ENCODE measurements at regions of chr11 and their contacts with region 1.

Region 1: DNA sequence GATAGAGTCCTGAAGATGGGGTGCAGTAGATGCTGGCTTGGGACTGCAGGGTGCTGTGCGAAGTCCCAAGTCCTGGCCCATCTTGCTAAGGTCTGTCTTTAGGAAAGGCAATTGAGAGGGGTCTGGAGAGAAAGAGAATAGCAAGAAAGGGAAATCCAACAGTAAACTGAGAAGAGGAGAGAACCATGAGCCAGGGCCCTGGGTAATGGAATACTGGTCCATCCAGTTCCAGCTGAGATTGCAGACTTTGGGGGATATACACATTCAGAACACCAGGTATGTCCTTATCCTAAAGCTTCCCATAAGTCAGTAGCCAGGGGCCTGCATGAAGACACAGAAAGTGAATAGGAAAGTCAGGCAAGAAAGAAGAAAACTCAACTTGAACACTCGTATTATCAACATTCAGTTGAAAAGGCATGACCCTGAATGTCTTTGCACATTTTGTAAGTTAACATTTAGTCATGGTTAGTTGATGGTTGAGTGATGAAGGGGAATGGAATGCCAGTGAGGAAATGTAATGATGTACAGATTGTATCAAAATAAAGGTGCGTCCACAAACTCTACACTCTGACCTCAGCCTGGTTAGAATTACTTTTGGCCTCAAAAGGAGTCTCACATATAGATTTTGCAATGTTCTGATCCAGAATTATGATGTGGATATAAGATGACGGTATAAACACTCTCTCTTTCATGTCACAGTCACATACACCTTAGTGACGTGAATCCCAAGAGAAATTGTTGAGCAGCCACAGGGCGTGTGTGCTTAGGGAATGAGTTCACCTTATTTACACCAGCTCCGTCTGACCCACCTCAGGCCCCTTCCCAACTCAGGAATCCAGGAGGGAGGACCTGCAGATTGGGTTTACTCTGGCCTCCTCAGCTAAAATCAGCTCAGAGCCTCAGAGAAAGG is 100.3 kb downstream of the RDX start:
- DNase-seq: peak; percentile 87
- ATAC-seq: peak; percentile 55
- H3K4me3 ChIP-seq: no peak overlapping the region
- H3K27ac ChIP-seq: peak overlapping the region; percentile 59
- H3K4me1 ChIP-seq: peaks cover 26% of the 10 kb centered on the region
- H3K27me3 ChIP-seq: no peaks in the 10 kb centered on the region
- CTCF ChIP-seq: no peak
- POLR2A ChIP-seq: no peak
- RAD21 ChIP-seq: no peak

Region 2: DNA sequence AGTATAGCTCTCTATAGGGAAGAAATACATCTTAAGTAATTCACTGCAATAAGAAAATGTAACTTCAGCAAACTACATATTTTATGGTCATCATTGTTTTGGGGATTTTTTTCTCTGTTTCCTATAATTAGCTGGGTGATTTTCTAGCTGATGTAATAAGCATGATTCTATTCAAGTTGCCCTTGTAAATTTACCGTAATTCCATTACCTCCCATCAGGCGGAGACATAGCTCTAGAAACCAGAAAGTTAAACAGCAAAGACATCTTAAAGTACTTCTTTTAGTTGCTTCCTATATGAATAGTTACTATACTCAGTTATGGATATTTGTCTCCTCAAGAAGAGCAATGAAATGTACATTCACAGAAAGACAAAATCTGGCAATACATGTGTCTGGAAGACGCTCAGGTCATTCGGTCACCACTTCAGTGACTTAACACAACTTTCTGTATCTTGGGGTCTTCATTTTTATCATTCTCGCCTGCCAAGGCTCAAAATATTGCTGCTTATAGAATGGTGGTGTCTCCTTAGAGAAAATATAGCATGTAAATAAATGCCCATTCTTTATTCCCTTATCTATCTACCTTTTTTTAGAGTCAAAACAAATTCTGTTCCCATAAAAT is 342.8 kb before region 1 on chr11:
- CTCF ChIA-PET with region 1: no interaction called
- POLR2A ChIA-PET with region 1: no interaction called
- dilution Hi-C with region 1: no loop called
- in situ Hi-C with region 1: no loop called
- intact Hi-C with region 1: loop called (anchors 10 kb)
- DNase-seq: peak; percentile 87
- ATAC-seq: peak; percentile 87
- H3K4me3 ChIP-seq: no peak overlapping the region
- H3K27ac ChIP-seq: no peak overlapping the region
- H3K4me1 ChIP-seq: no peaks in the 10 kb centered on the region; the same call in 1 of the 2 replicates
- H3K27me3 ChIP-seq: no peaks in the 10 kb centered on the region
- CTCF ChIP-seq: peak; percentile 91
- POLR2A ChIP-seq: no peak
- RAD21 ChIP-seq: peak; percentile 87

Region 3: GRCh38 chr11:109971184-109971523 is 224.9 kb before region 1 on chr11:
- CTCF ChIA-PET with region 1: no interaction called
- POLR2A ChIA-PET with region 1: no interaction called
- dilution Hi-C with region 1: no loop called
- in situ Hi-C with region 1: loop called (anchors 25 kb)
- intact Hi-C with region 1: no loop called
- DNase-seq: peak; percentile 84
- ATAC-seq: peak; percentile 72
- H3K4me3 ChIP-seq: no peak overlapping the region
- H3K27ac ChIP-seq: no peak overlapping the region
- H3K4me1 ChIP-seq: peaks cover 3% of the 10 kb centered on the region; the same call in 1 of the 2 replicates
- H3K27me3 ChIP-seq: no peaks in the 10 kb centered on the region
- CTCF ChIP-seq: no peak
- POLR2A ChIP-seq: no peak
- RAD21 ChIP-seq: no peak

Region 4: GRCh38 chr11:110069158-110069737 is 126.9 kb before region 1 on chr11:
- CTCF ChIA-PET with region 1: no interaction called
- POLR2A ChIA-PET with region 1: no interaction called
- dilution Hi-C with region 1: no loop called
- in situ Hi-C with region 1: no loop called
- intact Hi-C with region 1: no loop called
- DNase-seq: peak; percentile 88
- ATAC-seq: peak; percentile 73
- H3K4me3 ChIP-seq: no peak overlapping the region
- H3K27ac ChIP-seq: no peak overlapping the region
- H3K4me1 ChIP-seq: peaks cover 10% of the 10 kb centered on the region
- H3K27me3 ChIP-seq: no peaks in the 10 kb centered on the region
- CTCF ChIP-seq: no peak
- POLR2A ChIP-seq: no peak
- RAD21 ChIP-seq: no peak

Region 5: GRCh38 chr11:110366291-110366690 is 170.2 kb after region 1 on chr11:
- CTCF ChIA-PET with region 1: interaction called, 8 read pairs
- POLR2A ChIA-PET with region 1: no interaction called
- dilution Hi-C with region 1: no loop called
- in situ Hi-C with region 1: loop called (anchors 5 kb)
- intact Hi-C with region 1: loop called (anchors 2 kb)
- DNase-seq: peak; percentile 28
- ATAC-seq: peak; percentile 78
- H3K4me3 ChIP-seq: no peak overlapping the region
- H3K27ac ChIP-seq: no peak overlapping the region
- H3K4me1 ChIP-seq: peaks cover 4% of the 10 kb centered on the region
- H3K27me3 ChIP-seq: no peaks in the 10 kb centered on the region
- CTCF ChIP-seq: no peak
- POLR2A ChIP-seq: no peak
- RAD21 ChIP-seq: no peak

Region 6: DNA sequence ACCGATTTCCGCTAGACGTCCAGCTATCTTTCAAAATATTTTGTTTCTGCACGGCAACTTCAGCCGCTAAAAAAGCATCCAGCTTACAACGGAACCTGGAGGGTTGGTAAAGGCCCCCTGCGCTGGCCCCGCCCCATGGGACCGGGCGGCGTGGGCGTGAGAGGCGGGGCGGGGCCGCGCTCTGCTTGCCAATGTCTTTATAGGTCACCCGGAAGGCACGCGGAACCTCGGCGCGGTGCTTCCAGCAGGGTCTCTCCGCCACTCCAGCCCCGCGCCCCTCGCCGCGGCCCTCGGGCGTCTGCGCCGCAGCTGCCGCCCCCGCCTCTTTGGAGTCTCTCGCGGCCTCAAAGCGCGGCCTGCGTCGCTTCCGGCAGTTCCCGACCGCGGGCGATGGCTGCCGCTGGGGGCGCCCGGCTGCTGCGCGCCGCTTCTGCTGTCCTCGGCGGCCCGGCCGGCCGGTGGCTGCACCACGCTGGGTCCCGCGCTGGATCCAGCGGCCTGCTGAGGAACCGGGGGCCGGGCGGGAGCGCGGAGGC is 233.7 kb after region 1 on chr11 and contains the start of gene FDX1:
- CTCF ChIA-PET with region 1: interaction called, 18 read pairs
- POLR2A ChIA-PET with region 1: interaction called, 3 read pairs
- dilution Hi-C with region 1: no loop called
- in situ Hi-C with region 1: loop called (anchors 5 kb)
- intact Hi-C with region 1: loop called (anchors 1 kb)
- DNase-seq: peak; percentile 74
- ATAC-seq: peak; percentile 86
- H3K4me3 ChIP-seq: peak within 1 kb of the TSS; percentile 86
- H3K27ac ChIP-seq: peak within 1 kb of the TSS; percentile 92
- H3K4me1 ChIP-seq: peaks cover 9% of the 10 kb centered on the region
- H3K27me3 ChIP-seq: no peaks in the 10 kb centered on the region
- CTCF ChIP-seq: peak; percentile 65
- POLR2A ChIP-seq: peak; percentile 82
- RAD21 ChIP-seq: peak; percentile 38
- total RNA-seq, gene FDX1: 4.3 and 10.6 TPM in 2 replicates

Region 7: DNA sequence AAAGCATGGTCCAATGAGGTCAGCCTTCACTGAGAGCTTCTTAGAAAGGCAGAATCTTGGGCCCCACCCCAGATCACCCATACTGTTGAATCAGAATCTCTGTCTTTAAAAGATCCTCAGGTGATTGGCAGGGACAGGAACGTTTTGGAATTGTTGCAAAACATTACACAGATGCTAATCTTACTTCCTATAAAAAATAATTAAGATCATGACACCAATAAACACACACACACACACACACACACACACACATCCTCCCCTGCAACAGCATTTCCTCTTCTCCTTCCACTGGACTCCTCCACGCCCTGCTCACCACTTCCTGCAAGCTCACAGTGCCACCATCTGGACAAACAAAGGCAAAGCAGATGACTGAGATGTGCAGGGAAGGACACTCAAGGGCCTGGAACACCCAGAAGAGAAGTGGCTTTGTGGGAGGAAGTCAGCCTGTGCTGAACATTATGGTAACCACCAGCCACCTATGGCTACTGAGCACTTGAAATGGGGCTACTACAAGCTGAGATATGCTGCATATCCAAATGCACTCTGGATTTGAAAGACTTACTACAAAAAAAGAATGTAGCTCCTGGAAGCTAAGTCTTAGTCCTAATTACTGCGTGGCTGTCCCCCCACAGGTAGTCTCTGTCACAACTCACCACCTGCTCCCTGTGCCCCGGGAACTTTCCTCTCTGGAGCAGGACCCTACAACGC is 1250.5 kb after region 1 on chr11:
- CTCF ChIA-PET with region 1: no interaction called
- POLR2A ChIA-PET with region 1: no interaction called
- dilution Hi-C with region 1: no loop called
- in situ Hi-C with region 1: loop called (anchors 25 kb)
- intact Hi-C with region 1: loop called (anchors 10 kb)
- DNase-seq: peak; percentile 94
- ATAC-seq: peak; percentile 98
- H3K4me3 ChIP-seq: no peak overlapping the region
- H3K27ac ChIP-seq: no peak overlapping the region
- H3K4me1 ChIP-seq: no peaks in the 10 kb centered on the region; the same call in 1 of the 2 replicates
- H3K27me3 ChIP-seq: no peaks in the 10 kb centered on the region; the same call in 1 of the 2 replicates
- CTCF ChIP-seq: peak; percentile 95
- POLR2A ChIP-seq: 0 out of 2 replicates have a peak, but pooled peaks have one; percentile 48
- RAD21 ChIP-seq: peak; percentile 99

Measured in IMR-90 (cell line).